Pancreas (tissue), 10 donors: ENCODE measurements at regions of chr1 and their contacts with region 1.

Region 1: GRCh38 chr1:99180343-99180808 is 83.9 kb upstream of the PLPPR4 start:
- DNase-seq: peak in 5 of 6 donors; percentile 61 to 81 (median 68)
- ATAC-seq: peak; percentile 96 to 99 (median 98)
- H3K4me3 ChIP-seq: no peak overlapping the region
- H3K27ac ChIP-seq: no peak overlapping the region
- H3K4me1 ChIP-seq: no peaks in the 10 kb centered on the region
- H3K27me3 ChIP-seq: no peaks in the 10 kb centered on the region
- CTCF ChIP-seq: peak; percentile 48 to 75 (median 64)

Region 2: DNA sequence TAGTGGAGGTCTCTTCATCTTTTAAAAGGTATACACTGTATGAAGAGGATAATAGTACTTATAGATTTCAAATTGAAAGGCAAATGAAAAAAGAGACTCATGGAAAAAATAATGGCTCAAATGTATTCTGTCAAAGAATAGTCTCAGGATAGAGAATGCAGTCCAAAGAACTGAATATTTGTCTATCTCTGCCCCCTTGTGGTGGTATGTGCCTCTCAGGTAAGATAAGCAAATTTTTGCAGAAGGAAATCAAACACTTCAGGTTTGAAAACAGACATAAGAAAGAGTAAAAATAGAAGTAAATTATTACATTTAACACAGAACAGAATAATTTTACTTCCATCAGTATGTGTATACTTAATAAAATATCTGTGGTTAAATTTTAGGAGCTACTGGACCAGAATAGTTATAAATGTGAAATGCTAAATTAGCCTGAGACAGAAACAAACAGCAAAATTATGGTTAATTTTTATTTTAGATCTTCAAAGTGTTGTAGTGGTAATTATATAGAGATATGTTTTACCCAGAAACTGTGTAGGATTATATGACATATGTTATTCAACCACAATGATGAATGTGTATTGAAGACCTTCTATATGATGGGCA is 301.1 kb after region 1 on chr1:
- intact Hi-C with region 1: loop called in 2 of 3 experiments (anchors 10 kb)
- DNase-seq: peak in 3 of 6 donors; percentile 29 to 52 (median 34)
- ATAC-seq: peak; percentile 64 to 85 (median 82)
- H3K4me3 ChIP-seq: no peak overlapping the region
- H3K27ac ChIP-seq: no peak overlapping the region
- H3K4me1 ChIP-seq: no peaks in the 10 kb centered on the region
- H3K27me3 ChIP-seq: no peaks in the 10 kb centered on the region
- CTCF ChIP-seq: peak; percentile 35 to 54 (median 47)

Region 3: GRCh38 chr1:99707535-99708142 is 527.3 kb after region 1 on chr1:
- intact Hi-C with region 1: loop called in 2 of 3 experiments (anchors 10 kb)
- DNase-seq: peak in 5 of 6 donors; percentile 16 to 71 (median 45)
- ATAC-seq: peak; percentile 61 to 92 (median 88)
- H3K4me3 ChIP-seq: no peak overlapping the region
- H3K27ac ChIP-seq: no peak overlapping the region
- H3K4me1 ChIP-seq: no peaks in the 10 kb centered on the region
- H3K27me3 ChIP-seq: no peaks in the 10 kb centered on the region
- CTCF ChIP-seq: peak; percentile 48 to 73 (median 65)

Region 4: GRCh38 chr1:99717005-99717404 is 536.6 kb after region 1 on chr1:
- intact Hi-C with region 1: loop called in 1 of 3 experiments (anchors 10 kb)
- DNase-seq: no peak
- ATAC-seq: no peak
- H3K4me3 ChIP-seq: no peak overlapping the region
- H3K27ac ChIP-seq: no peak overlapping the region
- H3K4me1 ChIP-seq: no peaks in the 10 kb centered on the region
- H3K27me3 ChIP-seq: no peaks in the 10 kb centered on the region
- CTCF ChIP-seq: no peak